ENCODE measurements at regions of chr5 and their contacts with region 1.

Region 1: GRCh38 chr5:43008369-43009153 is 31.6 kb downstream of the ANXA2R start:
- DNase-seq: peak; percentile 94 to 95
- H3K4me3 ChIP-seq: peak overlapping the region; percentile 68
- H3K4me3 Mint-ChIP-seq: peak overlapping the region; percentile 94
- H3K27ac Mint-ChIP-seq: peak overlapping the region; percentile 97
- H3K4me1 ChIP-seq: no peaks in the 10 kb centered on the region; the same call in 1 of the 2 replicates
- H3K4me1 Mint-ChIP-seq: peaks cover 14% of the 10 kb centered on the region
- H3K27me3 ChIP-seq: no peaks in the 10 kb centered on the region
- H3K27me3 Mint-ChIP-seq: peaks cover 3% of the 10 kb centered on the region
- CTCF ChIP-seq: peak in 1 of 2 experiments; percentile 42

Region 2: GRCh38 chr5:42745426-42745825 is 263.1 kb before region 1 on chr5:
- CTCF ChIA-PET with region 1: no interaction called
- POLR2A ChIA-PET with region 1: no interaction called
- intact Hi-C with region 1: no loop called
- DNase-seq: no peak
- H3K4me3 ChIP-seq: no peak overlapping the region
- H3K4me3 Mint-ChIP-seq: no peak overlapping the region
- H3K27ac Mint-ChIP-seq: no peak overlapping the region
- H3K4me1 ChIP-seq: no peaks in the 10 kb centered on the region
- H3K4me1 Mint-ChIP-seq: no peaks in the 10 kb centered on the region
- H3K27me3 ChIP-seq: no peaks in the 10 kb centered on the region
- H3K27me3 Mint-ChIP-seq: no peaks in the 10 kb centered on the region
- CTCF ChIP-seq: no peak

Region 3: GRCh38 chr5:42994246-42995151 is 14.1 kb before region 1 on chr5:
- CTCF ChIA-PET with region 1: no interaction called
- POLR2A ChIA-PET with region 1: interaction called, 7 read pairs
- intact Hi-C with region 1: loop called (anchors 1 kb)
- DNase-seq: peak in 1 of 2 experiments; percentile 67
- H3K4me3 ChIP-seq: no peak overlapping the region
- H3K4me3 Mint-ChIP-seq: peak overlapping the region; percentile 42
- H3K27ac Mint-ChIP-seq: no peak overlapping the region
- H3K4me1 ChIP-seq: no peaks in the 10 kb centered on the region
- H3K4me1 Mint-ChIP-seq: no peaks in the 10 kb centered on the region
- H3K27me3 ChIP-seq: no peaks in the 10 kb centered on the region
- H3K27me3 Mint-ChIP-seq: no peaks in the 10 kb centered on the region
- CTCF ChIP-seq: peak; percentile 46 to 50

Region 4: GRCh38 chr5:43040287-43041098 is 31.9 kb after region 1 on chr5 and contains the start of gene ANXA2R:
- CTCF ChIA-PET with region 1: interaction called, 9 read pairs
- POLR2A ChIA-PET with region 1: no interaction called
- intact Hi-C with region 1: loop called (anchors 1 kb)
- DNase-seq: peak; percentile 92 to 93
- H3K4me3 ChIP-seq: peak within 1 kb of the TSS; percentile 80
- H3K4me3 Mint-ChIP-seq: peak within 1 kb of the TSS; percentile 86
- H3K27ac Mint-ChIP-seq: peak within 1 kb of the TSS; percentile 58
- H3K4me1 ChIP-seq: no peaks in the 10 kb centered on the region
- H3K4me1 Mint-ChIP-seq: no peaks in the 10 kb centered on the region
- H3K27me3 ChIP-seq: no peaks in the 10 kb centered on the region
- H3K27me3 Mint-ChIP-seq: no peaks in the 10 kb centered on the region
- CTCF ChIP-seq: peak; percentile 87 to 88
- total RNA-seq, gene ANXA2R: 3.1 and 4.1 TPM in 2 replicates

Region 5: GRCh38 chr5:43066799-43067741 is 58.5 kb after region 1 on chr5:
- CTCF ChIA-PET with region 1: interaction called, 5 read pairs
- POLR2A ChIA-PET with region 1: no interaction called
- intact Hi-C with region 1: loop called (anchors 2 kb)
- DNase-seq: peak; percentile 89 to 90
- H3K4me3 ChIP-seq: peak overlapping the region; percentile 57
- H3K4me3 Mint-ChIP-seq: peak overlapping the region; percentile 88
- H3K27ac Mint-ChIP-seq: peak overlapping the region; percentile 86
- H3K4me1 ChIP-seq: peaks cover 20% of the 10 kb centered on the region
- H3K4me1 Mint-ChIP-seq: peaks cover 19% of the 10 kb centered on the region
- H3K27me3 ChIP-seq: no peaks in the 10 kb centered on the region
- H3K27me3 Mint-ChIP-seq: no peaks in the 10 kb centered on the region
- CTCF ChIP-seq: no peak

Measured in Caco-2 (cell line).